Activated CD4-positive, alpha-beta memory T cell treated with anti-CD3 and anti-CD28 coated beads for 36 hours (primary cell): ENCODE measurements at regions of chr17 and their contacts with region 1.

Region 1: DNA sequence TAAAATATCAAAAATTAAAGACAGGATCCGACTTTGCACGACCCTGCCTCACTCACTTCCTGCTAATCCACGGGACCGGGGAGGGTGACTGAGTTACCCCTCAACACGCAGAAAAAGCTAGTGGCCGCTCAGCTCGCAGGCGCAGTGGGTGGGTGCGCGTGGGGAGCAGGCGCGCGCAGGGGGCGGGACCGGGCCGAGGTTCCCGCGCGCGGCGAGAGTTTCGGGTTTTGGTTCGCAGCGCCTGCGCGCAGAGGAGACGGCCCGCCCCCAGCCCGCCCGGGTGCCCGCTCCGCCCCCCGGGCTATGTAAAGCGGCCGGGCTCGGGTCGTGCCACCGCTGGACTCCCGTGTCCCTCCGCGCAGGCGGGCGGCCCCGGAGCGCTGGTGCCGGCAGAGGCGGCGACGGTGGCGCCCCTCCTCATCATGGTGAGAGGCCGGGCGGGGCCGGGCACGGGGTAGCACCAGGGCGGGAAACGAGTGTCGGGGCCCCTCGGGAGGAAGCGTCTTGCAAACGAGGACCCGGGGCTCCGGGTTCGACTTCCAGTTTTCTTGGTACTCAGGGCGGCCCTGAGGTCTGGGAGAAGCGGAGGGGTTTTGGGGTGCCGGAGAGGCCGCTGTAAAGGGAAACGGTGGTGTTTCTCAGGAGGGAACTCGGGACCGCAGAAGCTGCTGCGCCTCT is at the start of gene CNP:
- DNase-seq: peak; percentile 93
- H3K4me3 Mint-ChIP-seq: peak within 1 kb of the TSS; percentile 78
- H3K27ac Mint-ChIP-seq: peak within 1 kb of the TSS; percentile 83
- H3K4me1 Mint-ChIP-seq: peaks cover 40% of the 10 kb centered on the region
- H3K27me3 Mint-ChIP-seq: no peaks in the 10 kb centered on the region
- total RNA-seq, gene CNP: 66.6 to 68.0 TPM

Region 2: GRCh38 chr17:41918314-41919164 is 48.1 kb before region 1 on chr17 and contains the start of gene ACLY:
- CTCF ChIA-PET with region 1: interaction called, 3 read pairs
- POLR2A ChIA-PET with region 1: interaction called, 3 read pairs
- intact Hi-C with region 1: loop called (anchors 5 kb)
- DNase-seq: peak; percentile 98
- H3K4me3 Mint-ChIP-seq: peak within 1 kb of the TSS; percentile 95
- H3K27ac Mint-ChIP-seq: peak within 1 kb of the TSS; percentile 86
- H3K4me1 Mint-ChIP-seq: peaks cover 35% of the 10 kb centered on the region
- H3K27me3 Mint-ChIP-seq: no peaks in the 10 kb centered on the region
- total RNA-seq, gene ACLY: 186 to 203 TPM

Region 3: GRCh38 chr17:41930009-41930832 is 36.4 kb before region 1 on chr17 and contains the start of gene ODAD4:
- CTCF ChIA-PET with region 1: interaction called, 5 read pairs
- POLR2A ChIA-PET with region 1: interaction called, 12 read pairs
- intact Hi-C with region 1: loop called (anchors 2 kb)
- DNase-seq: peak; percentile 98
- H3K4me3 Mint-ChIP-seq: peak within 1 kb of the TSS; percentile 94
- H3K27ac Mint-ChIP-seq: peak within 1 kb of the TSS; percentile 93
- H3K4me1 Mint-ChIP-seq: peaks cover 13% of the 10 kb centered on the region
- H3K27me3 Mint-ChIP-seq: no peaks in the 10 kb centered on the region
- total RNA-seq, gene ODAD4: 0.77 to 1.4 TPM

Region 4: GRCh38 chr17:42120770-42121769 is 154.5 kb after region 1 on chr17 and contains the start of gene KAT2A:
- CTCF ChIA-PET with region 1: interaction called, 43 read pairs
- POLR2A ChIA-PET with region 1: interaction called, 7 read pairs
- intact Hi-C with region 1: loop called (anchors 1 kb)
- DNase-seq: peak; percentile 85
- H3K4me3 Mint-ChIP-seq: peak within 1 kb of the TSS; percentile 56
- H3K27ac Mint-ChIP-seq: peak within 1 kb of the TSS; percentile 51
- H3K4me1 Mint-ChIP-seq: peaks cover 31% of the 10 kb centered on the region
- H3K27me3 Mint-ChIP-seq: no peaks in the 10 kb centered on the region
- total RNA-seq, gene KAT2A: 38.6 to 41.0 TPM

Region 5: GRCh38 chr17:42153919-42154742 is 187.5 kb after region 1 on chr17:
- CTCF ChIA-PET with region 1: no interaction called
- POLR2A ChIA-PET with region 1: no interaction called
- intact Hi-C with region 1: loop called (anchors 2 kb)
- DNase-seq: peak; percentile 20
- H3K4me3 Mint-ChIP-seq: peak overlapping the region; percentile 86
- H3K27ac Mint-ChIP-seq: peak overlapping the region; percentile 80
- H3K4me1 Mint-ChIP-seq: peaks cover 34% of the 10 kb centered on the region
- H3K27me3 Mint-ChIP-seq: no peaks in the 10 kb centered on the region